ENCODE measurements at regions of chr21 and their contacts with region 1.

Region 1: DNA sequence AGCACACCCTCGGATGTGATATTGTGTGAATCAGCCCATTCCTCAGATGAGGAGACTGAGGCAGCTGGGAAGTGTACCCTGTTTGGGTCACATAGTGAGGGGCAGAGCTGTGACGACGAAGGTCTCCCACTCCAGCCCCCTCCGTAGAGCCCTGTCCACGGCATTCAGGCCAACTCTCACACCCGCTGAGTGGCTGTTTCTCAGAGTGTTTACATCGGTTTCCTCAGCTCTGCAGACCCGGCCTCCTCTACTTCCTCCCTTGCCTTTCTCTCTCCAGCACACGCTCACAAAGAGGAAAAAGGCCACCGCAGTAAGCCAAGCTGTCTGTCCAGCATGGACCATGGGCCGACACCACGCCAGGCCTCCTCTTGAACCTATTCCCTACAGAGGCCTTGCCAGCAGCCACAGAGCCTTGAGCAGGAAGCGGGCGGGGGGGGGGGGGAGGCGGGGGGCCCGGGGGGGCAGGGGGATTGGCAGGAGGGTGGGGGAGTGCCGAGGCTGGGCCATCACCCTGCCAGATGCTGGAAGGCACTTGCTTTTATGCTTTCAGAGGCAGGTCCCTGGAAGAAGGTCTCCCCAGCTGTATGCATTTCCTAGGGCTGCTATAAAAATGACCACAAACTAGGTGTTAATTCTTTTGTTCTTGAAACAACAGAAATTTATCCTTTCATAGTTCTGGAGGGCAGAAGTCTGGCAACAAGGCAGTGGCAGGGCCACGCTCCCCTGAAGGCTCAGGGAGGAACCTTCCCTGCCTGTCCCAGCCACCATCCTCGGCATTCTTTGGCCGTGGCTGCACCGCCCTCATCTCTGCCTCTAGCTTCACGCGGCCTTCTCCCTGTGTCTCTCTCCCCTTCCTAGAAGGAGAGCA is 178.4 kb downstream of the PSMG1 start:
- DNase-seq: peak; percentile 75 to 91 (median 89)
- ATAC-seq: peak; percentile 61 to 79
- H3K4me3 ChIP-seq: no peak overlapping the region
- H3K27ac ChIP-seq: peak overlapping the region; percentile 91
- H3K4me1 ChIP-seq: peaks cover 14% of the 10 kb centered on the region
- H3K27me3 ChIP-seq: no peaks in the 10 kb centered on the region

Region 2: DNA sequence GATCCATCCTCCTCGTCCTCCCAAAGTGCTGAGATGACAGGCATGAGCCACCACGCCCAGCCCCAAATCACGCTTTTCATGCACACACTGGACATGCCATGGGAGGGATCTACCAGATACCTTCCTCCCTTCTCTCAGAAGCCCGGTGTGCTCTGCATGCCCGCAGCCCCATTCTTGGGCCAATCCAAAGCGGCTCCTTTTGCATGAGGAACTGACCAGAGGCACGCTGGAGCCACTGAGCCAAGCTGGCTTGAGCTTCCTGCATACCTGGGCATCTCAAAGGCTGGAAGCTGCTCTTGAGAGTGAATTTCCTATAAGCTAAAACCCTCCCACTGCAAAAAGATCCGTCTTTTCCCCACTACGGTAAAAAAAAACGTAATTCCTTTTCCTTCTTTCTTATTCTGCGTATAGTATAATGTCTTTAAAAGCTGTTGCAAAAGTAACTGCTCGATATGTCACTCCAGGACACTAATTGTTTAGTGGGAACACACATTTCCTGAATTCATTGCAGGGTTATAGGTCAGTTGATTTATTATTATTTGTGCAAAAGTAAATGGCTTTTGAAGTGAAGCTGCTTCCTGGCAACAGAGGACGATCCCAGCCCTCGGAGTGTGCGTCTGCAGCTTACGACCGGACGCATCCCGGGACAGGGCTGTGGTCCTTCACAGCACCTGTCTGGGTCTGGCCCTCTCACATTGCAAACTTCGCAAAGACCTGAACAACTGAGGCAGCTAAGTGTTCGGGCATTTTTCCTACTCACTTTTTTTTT is 260.9 kb before region 1 on chr21:
- intact Hi-C with region 1: loop called in 1 of 4 experiments (anchors 10 kb)
- DNase-seq: peak in 1 of 3 donors; percentile 16
- ATAC-seq: no peak
- H3K4me3 ChIP-seq: no peak overlapping the region
- H3K27ac ChIP-seq: peak overlapping the region; percentile 23
- H3K4me1 ChIP-seq: no peaks in the 10 kb centered on the region
- H3K27me3 ChIP-seq: no peaks in the 10 kb centered on the region

Region 3: DNA sequence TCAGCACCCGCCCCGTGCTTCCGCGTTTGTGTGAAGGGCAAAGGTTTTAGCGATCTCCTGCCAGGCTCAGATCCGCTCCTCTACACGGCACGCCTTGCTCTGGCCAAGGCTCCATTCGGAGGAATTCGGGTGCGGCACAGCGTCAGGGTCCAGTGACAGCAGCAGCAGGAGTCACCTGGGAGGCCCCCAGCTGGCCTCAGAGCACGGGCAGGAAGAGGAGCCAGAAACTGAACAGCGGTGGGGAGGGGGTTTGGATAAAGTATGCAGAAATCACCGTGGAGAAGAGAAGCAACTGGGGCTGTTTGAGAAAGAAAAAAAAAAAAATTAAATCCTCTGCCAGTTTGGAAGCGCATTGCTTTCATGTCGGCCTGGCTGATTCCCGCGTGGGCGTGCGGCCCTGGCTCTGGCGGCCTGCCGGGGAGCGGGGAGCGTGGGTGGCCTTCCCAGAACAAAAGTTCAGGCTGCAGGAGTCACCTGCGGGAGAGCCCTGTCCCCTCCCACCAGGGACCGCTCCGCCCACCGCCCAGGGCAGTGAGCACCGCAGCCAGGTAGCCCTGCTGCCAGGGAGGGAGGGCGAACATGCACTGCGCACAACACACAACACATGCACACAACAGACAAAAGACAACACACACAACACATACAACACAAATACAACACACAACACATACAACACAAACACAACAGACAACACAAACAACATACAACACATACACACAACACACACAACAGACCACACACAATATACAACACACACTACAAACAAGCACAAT is 91.6 kb before region 1 on chr21:
- intact Hi-C with region 1: loop called in 1 of 4 experiments (anchors 5 kb)
- DNase-seq: peak; percentile 76 to 88 (median 86)
- ATAC-seq: peak; percentile 80 to 85
- H3K4me3 ChIP-seq: no peak overlapping the region
- H3K27ac ChIP-seq: peak overlapping the region; percentile 61
- H3K4me1 ChIP-seq: peaks cover 6% of the 10 kb centered on the region
- H3K27me3 ChIP-seq: no peaks in the 10 kb centered on the region

Region 4: DNA sequence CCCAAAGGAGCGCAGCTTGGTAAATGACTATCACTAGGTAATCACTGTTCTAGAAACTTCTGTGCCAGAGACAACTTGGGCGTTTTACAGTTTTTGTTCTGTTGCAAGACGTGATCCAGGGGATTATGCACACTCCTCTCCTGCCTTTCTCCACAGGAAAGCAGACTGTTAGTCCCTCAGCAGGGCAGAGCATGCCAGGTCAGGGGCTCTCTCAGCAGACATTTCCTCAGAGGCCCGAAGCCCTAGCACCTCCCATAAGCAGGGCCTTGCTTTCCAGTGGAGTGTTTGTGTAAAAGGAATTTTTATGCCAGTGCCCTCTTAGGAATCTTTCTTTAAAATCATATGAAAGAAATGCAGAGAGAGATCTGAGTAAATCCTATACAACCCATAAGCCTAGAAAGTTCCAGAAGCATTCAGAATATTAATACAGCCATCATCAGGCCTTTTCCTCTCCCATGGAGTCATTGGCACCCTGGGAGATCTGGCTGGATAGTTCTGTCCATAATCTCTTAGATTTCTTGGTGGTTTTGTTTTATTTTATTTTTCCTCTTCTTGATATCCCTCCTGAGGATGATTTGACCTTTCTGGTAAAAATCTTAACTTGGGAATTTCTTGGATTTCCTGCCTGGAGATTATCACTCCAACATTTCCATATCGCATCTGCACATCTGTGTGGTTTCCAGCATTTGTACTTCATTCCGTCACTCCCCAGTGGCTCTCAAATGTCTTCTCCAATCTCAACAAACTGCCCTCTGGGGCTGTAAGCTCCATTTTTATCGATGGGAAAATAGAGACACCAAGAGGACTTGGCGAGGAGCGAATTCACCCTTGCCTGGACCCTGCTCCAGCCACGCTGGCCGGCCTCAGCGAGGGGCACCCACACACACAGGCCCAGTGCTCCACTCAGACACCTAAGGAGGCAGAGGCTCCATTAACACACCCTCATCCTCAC is 62.2 kb after region 1 on chr21:
- intact Hi-C with region 1: loop called in 1 of 4 experiments (anchors 10 kb)
- DNase-seq: peak in 1 of 3 donors; percentile 67
- ATAC-seq: peak; percentile 78 to 91
- H3K4me3 ChIP-seq: no peak overlapping the region
- H3K27ac ChIP-seq: peak overlapping the region; percentile 75
- H3K4me1 ChIP-seq: peaks cover 4% of the 10 kb centered on the region
- H3K27me3 ChIP-seq: no peaks in the 10 kb centered on the region

Region 5: DNA sequence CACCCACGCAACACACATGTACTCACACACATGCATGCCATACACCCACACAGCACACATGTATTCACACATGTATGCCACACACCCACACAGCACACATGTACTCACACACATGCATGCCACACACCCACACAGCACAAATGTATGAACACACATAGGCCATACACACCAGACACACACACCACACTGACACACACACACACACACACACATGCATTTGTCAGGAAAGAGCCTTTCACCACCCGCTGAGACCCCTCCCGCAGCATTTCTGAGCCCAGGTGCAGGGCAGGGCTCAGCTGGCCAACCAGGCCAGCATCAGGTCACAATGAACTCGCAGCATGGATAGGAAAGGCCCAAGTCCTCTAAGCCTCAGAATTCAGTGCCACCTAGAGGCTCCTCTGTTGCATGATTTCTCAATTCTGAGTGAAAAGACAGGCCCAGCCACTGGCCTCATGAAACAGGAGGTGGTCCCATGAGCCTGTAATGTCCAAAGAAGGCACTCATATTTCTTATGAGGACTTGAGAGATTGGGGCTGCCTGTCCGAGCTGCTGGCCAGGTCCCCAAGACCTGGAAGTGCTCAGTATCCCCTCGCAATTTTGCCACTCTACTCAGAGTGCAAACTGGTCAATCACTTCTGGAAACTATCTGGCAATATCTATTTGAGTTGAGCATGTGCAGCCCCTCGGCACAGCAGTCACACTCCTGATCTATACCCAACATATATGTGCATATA is 121.1 kb after region 1 on chr21:
- intact Hi-C with region 1: loop called in 1 of 4 experiments (anchors 10 kb)
- DNase-seq: no peak
- ATAC-seq: peak; percentile 94
- H3K4me3 ChIP-seq: no peak overlapping the region
- H3K27ac ChIP-seq: no peak overlapping the region
- H3K4me1 ChIP-seq: no peaks in the 10 kb centered on the region
- H3K27me3 ChIP-seq: no peaks in the 10 kb centered on the region

Region 6: GRCh38 chr21:39288987-39289386 is 284.1 kb after region 1 on chr21:
- intact Hi-C with region 1: no loop called
- DNase-seq: no peak
- ATAC-seq: no peak
- H3K4me3 ChIP-seq: no peak overlapping the region
- H3K27ac ChIP-seq: no peak overlapping the region
- H3K4me1 ChIP-seq: no peaks in the 10 kb centered on the region
- H3K27me3 ChIP-seq: no peaks in the 10 kb centered on the region